Activated T-helper 1 cell treated with anti-CD3 and anti-CD28 coated beads, Interleukin-12 subunit alpha, Interleukin-12 subunit beta, Interleukin-2, Interleukin-4 antibody, amounts not matched to agents 30 ng/mL and 10 ng/mL and 1 ng/mL, durations not matched to agents 14 hours and 24 hours and 36 hours (primary cell): ENCODE measurements at regions of chr3 and their contacts with region 1.

Region 1: DNA sequence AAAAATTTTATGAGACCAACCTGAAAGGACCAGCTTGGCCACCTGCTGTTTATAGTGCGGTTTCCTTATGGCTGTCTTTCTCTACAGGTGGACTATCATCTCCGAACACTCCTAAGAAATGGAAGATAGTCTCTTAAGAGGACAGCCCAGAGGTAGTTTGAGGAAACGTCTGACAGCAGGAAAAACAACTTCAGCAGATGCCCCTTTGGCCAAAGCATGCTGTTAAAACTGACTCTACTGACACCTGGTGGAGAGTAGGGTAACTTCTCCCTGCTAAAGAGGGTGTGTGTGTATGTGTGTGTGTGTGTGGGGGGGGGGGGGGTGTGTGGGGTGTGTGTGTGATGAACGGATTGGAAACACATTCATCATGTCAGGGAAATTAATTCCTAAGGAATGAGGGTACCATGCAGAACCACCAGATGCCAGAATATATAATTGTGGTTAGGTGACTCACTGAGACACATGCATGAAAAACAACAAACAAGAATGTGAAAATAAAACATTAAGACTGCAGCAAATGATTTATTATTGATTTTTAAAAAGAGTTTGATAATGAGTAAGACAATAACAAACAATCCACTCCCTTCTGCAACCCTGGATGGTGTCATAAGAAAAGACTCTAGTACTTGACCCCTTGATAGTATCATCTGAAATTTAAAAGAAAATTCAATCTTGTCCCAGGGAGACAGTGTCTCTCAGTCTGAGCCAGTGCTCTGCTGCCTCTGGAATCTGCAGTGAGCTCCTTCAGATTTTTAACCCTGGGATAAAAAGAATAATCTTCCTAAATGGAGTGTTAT is 256.5 kb downstream of the THRB start:
- DNase-seq: peak; percentile 8
- H3K4me3 Mint-ChIP-seq: no peak overlapping the region
- H3K27ac Mint-ChIP-seq: no peak overlapping the region
- H3K4me1 Mint-ChIP-seq: no peaks in the 10 kb centered on the region
- H3K27me3 Mint-ChIP-seq: peaks cover 2% of the 10 kb centered on the region

Region 2: DNA sequence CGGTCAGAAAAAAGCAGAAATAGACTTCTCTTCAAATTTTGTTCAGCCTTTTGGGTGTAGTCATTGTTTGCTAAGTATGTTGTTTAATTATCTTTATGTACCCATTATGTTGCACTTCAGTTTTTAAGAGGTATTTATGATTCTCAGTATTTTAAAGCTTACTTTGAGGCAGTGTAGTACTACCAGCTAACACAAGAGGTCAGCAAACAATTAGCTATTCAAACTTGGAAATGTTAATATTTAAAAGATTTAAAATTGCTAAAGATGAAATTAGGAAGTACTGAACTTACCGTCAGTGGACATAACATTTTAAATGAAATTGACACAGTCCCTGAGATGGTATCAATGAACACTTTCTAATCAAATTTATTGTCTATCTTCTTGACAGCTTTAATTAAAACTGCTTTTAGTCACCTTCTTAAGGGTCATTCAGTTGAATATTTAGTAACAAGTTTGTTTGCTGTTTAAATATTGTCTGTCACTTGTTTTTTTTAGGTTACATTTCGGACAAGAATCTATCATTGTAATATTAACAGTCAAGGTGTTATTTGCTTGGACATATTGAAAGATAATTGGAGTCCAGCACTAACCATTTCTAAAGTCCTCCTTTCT is 349.4 kb before region 1 on chr3:
- intact Hi-C with region 1: loop called (anchors 1 kb)
- DNase-seq: no peak
- H3K4me3 Mint-ChIP-seq: no peak overlapping the region
- H3K27ac Mint-ChIP-seq: no peak overlapping the region
- H3K4me1 Mint-ChIP-seq: no peaks in the 10 kb centered on the region
- H3K27me3 Mint-ChIP-seq: no peaks in the 10 kb centered on the region

Region 3: DNA sequence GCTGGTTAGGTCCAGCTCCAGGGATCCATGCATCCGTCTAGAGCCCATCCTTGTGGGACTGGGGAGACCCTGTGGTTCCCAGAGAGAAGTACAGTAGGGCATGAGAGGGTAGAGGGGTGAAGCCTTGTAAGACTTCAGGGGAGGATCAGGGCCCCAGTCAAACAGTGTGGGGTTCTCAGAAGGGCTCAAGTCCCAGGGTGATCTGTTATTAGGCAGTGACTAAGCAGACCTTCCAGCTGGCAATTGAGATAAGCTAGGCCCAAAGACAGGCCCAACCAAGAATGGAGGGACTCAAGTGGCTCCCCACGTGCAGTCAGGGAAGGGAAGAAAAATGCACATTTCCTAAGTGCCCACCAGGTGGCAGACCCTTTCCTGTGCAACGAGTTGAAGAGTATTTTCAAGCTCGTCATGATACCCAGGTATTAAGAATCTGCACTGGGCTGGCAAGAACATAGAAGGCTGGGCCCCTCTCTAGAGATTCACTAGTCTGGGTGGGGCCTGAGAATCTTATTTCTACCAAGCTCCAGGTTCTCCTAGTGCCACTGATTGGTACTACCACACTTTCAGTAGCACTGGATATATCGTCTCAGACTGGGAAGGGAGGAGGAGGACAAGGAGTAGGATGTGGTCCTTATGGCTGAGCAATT is 52.3 kb before region 1 on chr3:
- intact Hi-C with region 1: loop called (anchors 1 kb)
- DNase-seq: peak; percentile 2
- H3K4me3 Mint-ChIP-seq: no peak overlapping the region
- H3K27ac Mint-ChIP-seq: no peak overlapping the region
- H3K4me1 Mint-ChIP-seq: no peaks in the 10 kb centered on the region
- H3K27me3 Mint-ChIP-seq: peaks cover 2% of the 10 kb centered on the region

Region 4: DNA sequence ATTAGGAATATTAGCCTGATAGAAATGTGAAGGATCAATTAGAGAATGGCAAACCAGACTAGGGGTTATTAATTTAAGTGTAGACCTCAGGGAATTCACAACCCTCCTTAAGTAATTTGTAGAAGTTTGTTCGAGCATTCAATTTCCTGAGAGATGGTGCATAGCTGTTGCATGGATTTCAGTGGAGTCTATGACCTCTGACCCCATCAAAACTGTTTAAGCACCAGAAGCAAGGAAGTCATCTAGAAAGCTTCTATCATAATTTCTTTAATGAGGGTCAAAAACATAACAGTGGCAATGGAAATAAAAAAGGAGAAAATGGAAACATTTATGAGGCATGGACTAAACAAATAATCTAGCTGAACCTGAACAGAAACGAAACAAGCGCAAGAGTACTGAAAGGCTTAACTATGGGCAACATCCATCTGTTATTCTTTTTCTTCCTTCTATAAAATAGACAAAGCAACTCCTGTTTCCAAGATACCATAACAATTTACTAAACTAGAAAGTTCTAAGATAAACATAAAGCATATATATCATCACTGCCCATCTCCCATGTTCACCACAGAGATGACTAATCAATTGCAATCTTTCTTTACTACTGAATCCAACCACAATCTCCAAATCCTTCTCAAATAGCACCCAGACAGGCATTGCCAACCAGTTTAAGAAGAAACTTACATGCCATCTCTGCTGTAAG is 105.1 kb after region 1 on chr3:
- intact Hi-C with region 1: no loop called
- DNase-seq: no peak
- H3K4me3 Mint-ChIP-seq: no peak overlapping the region
- H3K27ac Mint-ChIP-seq: no peak overlapping the region
- H3K4me1 Mint-ChIP-seq: no peaks in the 10 kb centered on the region
- H3K27me3 Mint-ChIP-seq: no peaks in the 10 kb centered on the region

Region 5: GRCh38 chr3:24608701-24609390 is 370.7 kb after region 1 on chr3:
- intact Hi-C with region 1: no loop called
- DNase-seq: no peak
- H3K4me3 Mint-ChIP-seq: no peak overlapping the region
- H3K27ac Mint-ChIP-seq: no peak overlapping the region
- H3K4me1 Mint-ChIP-seq: no peaks in the 10 kb centered on the region
- H3K27me3 Mint-ChIP-seq: no peaks in the 10 kb centered on the region